ENCODE measurements at regions of chr2 and their contacts with region 1.

Region 1: GRCh38 chr2:218852911-218853667 is 6.5 kb upstream of the WNT6 start:
- DNase-seq: peak; percentile 65
- H3K4me3 Mint-ChIP-seq: no peak overlapping the region
- H3K27ac Mint-ChIP-seq: no peak overlapping the region
- H3K4me1 Mint-ChIP-seq: no peaks in the 10 kb centered on the region
- H3K27me3 Mint-ChIP-seq: peaks cover 55% of the 10 kb centered on the region

Region 2: DNA sequence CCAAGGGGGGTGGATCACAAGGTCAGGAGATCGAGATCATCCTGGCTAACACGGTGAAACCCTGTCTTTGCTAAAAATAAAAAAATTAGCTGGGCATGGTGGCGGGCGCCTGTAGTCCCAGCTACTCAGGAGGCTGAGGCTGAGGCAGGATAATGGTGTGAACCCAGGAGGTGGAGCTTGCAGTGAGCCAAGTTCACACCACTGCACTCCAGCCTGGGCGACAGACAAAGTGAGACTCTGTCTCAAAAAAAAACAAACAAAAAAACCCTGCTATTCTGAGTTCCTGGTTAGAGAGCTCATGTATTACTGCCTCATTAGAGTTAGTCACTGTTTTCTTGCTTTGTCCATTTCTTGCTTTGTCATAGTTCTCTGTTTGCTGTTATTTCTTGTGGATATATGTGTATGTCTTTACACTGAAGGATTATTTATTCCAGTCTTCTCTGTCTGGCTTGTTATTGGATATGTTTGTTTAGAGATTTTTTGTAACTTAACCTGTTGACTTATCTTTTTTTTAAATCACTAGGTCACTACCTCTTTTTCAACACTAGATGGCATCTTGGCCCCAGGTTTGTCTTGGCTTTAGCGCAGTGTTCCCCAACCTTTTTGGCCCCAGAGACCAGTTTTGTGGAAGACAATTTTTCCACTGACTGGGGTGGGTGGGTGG is 125.5 kb before region 1 on chr2:
- CTCF ChIA-PET with region 1: interaction called, 74 read pairs
- POLR2A ChIA-PET with region 1: interaction called, 3 read pairs
- DNase-seq: no peak
- H3K4me3 Mint-ChIP-seq: no peak overlapping the region
- H3K27ac Mint-ChIP-seq: no peak overlapping the region
- H3K4me1 Mint-ChIP-seq: peaks cover 21% of the 10 kb centered on the region
- H3K27me3 Mint-ChIP-seq: no peaks in the 10 kb centered on the region

Region 3: GRCh38 chr2:218927422-218927821 is 74.3 kb after region 1 on chr2:
- CTCF ChIA-PET with region 1: no interaction called
- POLR2A ChIA-PET with region 1: no interaction called
- DNase-seq: no peak
- H3K4me3 Mint-ChIP-seq: no peak overlapping the region
- H3K27ac Mint-ChIP-seq: no peak overlapping the region
- H3K4me1 Mint-ChIP-seq: no peaks in the 10 kb centered on the region
- H3K27me3 Mint-ChIP-seq: peaks cover 13% of the 10 kb centered on the region

Region 4: DNA sequence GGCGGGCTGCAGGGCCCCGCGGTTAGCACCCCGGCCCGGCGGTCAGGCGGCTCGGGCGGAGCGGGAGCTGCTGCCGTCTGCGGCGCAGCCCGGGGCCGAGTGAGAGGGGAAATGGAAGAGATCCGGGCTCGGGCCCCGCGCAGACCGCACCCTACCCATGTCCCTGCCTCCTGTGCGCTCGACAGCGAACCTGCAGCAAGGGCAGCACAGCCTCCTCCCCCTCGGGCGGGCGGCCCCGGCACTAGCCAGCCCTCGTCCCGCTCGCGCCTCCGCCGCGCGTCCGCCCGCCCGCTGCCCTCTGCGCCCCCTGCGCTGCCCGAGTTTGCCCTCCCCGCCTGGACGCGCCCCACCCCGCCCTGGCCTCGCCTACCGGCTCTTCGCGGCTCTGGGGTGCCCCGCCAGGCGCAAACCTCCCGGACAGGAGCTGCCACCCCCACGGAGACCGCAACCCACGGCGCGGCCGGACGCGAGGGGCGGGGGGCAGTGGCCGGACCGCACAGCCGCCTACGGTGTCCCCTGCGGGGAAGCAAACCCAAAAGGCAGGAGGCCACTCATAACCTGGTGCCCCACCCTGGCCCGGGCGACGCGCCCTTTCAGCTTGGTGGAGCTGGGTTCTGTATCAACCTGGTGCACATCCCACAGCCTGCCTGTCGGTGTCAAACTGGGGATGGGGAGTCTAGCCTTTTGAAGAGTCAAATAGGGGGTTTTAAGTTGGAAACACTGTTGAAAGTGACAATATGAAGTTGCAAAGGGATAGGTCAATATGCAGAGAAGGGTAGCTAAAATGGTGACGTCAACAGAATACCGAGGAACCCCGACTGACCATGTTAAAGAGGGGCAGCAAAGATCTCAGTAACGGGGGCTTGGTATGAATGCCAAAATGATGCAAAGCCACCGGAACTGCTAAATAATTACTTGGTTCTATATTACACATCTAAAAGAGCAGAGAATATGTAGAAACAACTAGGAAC is 208.0 kb after region 1 on chr2 and contains the start of gene IHH:
- CTCF ChIA-PET with region 1: no interaction called
- POLR2A ChIA-PET with region 1: no interaction called
- DNase-seq: no peak
- H3K4me3 Mint-ChIP-seq: peak within 1 kb of the TSS; percentile 1
- H3K27ac Mint-ChIP-seq: no peak within 1 kb of the TSS
- H3K4me1 Mint-ChIP-seq: peaks cover 18% of the 10 kb centered on the region
- H3K27me3 Mint-ChIP-seq: peaks cover 71% of the 10 kb centered on the region
- total RNA-seq, gene IHH: not detected